ENCODE measurements at regions of chr1 and their contacts with region 1.

Region 1: GRCh38 chr1:193121616-193122593 is at the start of gene CDC73:
- DNase-seq: peak; percentile 93 to 99 (median 97)

Region 2: GRCh38 chr1:192477630-192478029 is 644.3 kb before region 1 on chr1:
- intact Hi-C with region 1: loop called (anchors 5 kb)
- DNase-seq: no peak

Region 3: DNA sequence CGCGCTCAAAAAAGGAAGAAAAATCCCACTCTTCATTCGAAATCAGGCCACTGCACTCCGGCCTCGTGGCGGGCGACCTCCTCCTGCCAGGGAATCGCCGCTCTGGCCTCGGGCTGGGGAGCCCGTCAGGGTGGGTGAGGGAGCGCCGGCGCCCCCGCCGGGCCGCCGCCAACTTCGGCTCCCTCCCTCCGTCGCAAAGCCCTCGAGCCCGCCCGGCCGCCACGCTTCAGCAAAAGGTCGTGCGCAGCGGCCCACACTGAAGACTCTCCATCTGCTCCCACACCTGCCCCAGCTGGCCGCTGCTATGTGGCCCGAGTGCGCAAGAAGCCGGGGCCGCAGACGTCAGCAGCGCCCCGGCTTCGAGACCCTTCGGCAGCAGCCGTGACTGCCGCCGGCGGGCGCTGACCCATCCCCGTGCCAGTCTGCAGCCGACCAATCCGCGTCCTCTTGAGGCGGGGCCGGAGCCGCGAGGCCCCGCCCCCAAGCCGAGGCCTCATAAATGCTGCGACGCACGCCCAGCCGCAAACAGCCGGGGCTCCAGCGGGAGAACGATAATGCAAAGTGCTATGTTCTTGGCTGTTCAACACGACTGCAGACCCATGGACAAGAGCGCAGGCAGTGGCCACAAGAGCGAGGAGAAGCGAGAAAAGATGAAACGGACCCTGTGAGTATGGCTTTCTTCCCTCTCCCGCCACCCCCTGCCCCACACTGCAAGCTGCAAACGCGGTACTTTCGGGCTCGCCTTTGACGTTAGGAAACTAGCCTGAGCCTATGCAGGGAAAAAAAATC is 313.2 kb before region 1 on chr1 and contains the start of gene RGS2:
- intact Hi-C with region 1: loop called (anchors 5 kb)
- DNase-seq: peak; percentile 89 to 99 (median 95)

Region 4: DNA sequence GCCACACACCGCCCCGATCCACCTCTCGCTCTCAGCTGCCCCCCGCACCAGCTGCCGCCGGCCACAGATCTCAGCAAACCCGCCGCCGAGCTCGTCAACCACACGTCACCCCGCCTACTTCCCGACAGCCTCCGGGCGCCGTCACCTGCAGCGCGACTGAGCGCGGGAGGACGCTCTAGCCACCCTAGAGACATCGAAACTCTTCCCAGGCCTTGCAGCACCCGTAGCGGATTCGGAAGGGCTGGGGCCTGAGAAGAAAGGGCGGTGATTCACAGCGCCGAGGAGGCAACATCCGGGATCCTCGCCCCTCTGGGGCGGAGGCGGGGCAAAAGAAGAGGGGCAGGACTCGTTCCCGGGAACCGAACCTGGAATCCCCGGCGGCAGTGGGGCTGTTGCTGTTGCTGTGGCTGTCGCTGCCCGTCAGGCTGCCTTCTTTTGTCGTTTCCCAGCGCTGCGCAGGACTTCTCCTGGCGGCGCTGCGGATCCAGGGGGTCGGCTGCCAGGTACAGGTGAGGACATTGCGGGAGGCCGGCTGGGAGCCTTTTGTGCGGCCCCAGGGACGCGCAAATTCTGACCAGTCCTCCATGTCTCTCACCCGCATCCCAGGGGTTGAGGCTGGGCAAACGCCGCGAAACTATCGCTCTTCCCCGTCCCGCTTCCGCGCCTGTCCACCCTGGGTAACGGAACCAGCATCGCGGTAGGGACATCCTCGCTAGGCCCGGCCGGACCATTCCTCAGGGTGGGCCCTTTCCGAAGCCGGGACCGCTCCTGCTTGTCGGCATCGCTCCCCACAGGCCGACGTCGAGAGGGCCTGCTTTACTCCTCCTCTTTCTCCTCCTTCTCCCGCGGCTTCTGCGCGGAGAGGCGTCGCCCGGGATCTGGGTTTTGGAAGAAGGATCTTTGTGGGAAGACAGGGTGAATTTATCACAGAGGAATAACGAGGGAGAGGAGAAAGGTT is 62.4 kb before region 1 on chr1 and contains the starts of genes RO60 and UCHL5:
- intact Hi-C with region 1: loop called (anchors 1 kb)
- DNase-seq: peak; percentile 94 to 100 (median 96)

Region 5: GRCh38 chr1:193104906-193105820 is 16.7 kb before region 1 on chr1 and contains the start of gene GLRX2:
- intact Hi-C with region 1: loop called (anchors 1 kb)
- DNase-seq: peak; percentile 75 to 98 (median 86)

Region 6: DNA sequence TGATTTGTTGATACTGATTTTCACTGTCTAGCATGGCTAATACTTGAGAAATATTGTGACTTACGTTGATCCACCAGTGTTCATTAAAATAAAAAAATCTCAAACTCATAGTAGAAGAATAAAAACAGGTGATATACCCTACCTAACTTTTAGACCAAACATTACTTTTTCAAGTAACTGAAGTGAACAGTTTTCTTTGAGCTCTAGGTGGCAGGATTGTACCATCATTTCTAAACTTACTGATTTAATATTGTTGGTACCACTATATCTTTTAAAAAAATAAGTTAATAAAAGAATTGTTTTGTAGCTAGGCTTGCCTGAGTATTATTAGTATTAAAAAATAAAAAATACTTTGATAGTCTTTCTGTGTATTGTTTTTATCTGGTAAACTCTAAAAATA is 21.4 kb after region 1 on chr1:
- intact Hi-C with region 1: no loop called
- DNase-seq: no peak

Region 7: DNA sequence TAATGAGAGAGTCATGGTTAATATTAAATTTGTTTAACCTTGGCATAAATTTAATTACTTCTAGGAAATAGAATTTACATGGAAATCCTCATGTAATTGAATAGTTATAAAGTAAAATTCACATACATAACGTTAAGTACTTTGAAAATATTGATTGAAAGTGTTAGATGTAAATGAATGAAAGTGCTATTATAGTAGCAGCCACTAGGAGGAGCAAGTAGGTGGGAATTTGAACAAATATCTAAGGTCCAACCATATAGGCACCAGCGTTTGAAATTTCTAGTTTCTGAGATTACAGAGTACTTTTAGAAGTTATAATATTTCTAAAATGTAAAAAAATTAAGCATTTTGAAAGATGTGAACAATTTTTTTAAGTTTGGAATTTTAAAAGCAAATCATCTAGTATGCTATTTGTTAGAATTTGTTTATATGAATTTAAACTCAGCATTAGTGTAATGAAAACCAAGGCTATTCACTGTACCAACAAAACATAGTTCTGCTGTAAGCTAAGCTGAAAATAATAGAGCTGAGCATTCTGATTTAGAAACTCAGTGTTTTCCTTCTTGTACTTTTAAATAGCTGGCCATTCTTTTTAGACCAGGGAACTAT is 61.2 kb after region 1 on chr1:
- intact Hi-C with region 1: loop called (anchors 10 kb)
- DNase-seq: no peak